GM10248 (cell line): ENCODE measurements at regions of chr12 and their contacts with region 1.

Region 1: DNA sequence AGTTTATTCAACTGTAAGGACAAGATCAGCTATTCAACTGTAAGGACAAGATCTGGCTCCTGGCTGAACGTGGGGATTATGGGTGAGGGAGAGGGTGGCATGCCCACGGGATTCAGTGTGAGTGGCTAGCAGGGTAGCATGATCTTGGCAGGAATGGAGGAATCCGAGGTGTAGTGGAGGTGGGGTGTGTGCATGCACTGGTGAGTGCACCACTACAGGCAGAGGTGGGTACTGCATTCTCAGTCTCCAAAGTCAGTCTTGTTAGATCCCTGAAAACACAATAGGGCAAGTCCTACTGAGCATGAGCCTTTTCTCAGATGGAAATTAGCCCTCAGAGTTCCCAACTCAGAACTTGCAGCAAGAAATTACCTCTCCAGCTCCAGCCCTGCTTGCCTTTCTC is 32.2 kb upstream of the DCD start:
- DNase-seq: peak; percentile 39
- CTCF ChIP-seq: peak; percentile 24

Region 2: DNA sequence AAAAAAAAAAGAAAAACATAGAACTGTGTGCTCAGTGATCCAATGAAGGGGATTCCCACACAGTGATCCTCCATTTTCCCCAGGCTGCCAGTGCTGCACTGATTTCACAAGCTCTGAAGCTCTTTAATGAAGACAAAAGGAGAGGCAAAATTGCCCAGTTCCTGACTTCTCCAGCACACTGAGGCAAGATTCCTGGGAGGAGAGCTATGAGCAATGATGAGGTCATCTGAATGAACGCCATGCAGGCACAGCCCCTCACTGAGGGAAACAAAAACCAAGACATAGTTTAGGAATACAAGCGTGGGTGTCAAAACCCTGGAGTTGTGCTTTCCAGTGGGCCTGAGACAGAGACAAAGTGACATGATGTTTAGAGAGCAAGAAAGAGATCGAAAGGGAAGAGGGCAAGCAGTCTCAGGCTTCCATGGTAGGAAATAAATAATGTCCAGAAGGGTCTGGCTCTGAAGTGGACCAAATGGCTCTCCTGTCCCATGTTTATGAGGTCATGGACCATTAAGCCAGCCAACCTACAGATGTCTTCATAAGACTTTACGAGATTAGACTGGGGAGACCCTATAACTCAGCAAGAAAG is 450.7 kb before region 1 on chr12:
- CTCF ChIA-PET with region 1: no interaction called
- POLR2A ChIA-PET with region 1: no interaction called
- DNase-seq: no peak
- CTCF ChIP-seq: no peak

Region 3: GRCh38 chr12:54497883-54498282 is 182.5 kb before region 1 on chr12:
- CTCF ChIA-PET with region 1: no interaction called
- POLR2A ChIA-PET with region 1: no interaction called
- DNase-seq: no peak
- CTCF ChIP-seq: no peak

Region 4: GRCh38 chr12:54565986-54566544 is 114.3 kb before region 1 on chr12:
- CTCF ChIA-PET with region 1: no interaction called
- POLR2A ChIA-PET with region 1: no interaction called
- DNase-seq: no peak
- CTCF ChIP-seq: no peak

Region 5: DNA sequence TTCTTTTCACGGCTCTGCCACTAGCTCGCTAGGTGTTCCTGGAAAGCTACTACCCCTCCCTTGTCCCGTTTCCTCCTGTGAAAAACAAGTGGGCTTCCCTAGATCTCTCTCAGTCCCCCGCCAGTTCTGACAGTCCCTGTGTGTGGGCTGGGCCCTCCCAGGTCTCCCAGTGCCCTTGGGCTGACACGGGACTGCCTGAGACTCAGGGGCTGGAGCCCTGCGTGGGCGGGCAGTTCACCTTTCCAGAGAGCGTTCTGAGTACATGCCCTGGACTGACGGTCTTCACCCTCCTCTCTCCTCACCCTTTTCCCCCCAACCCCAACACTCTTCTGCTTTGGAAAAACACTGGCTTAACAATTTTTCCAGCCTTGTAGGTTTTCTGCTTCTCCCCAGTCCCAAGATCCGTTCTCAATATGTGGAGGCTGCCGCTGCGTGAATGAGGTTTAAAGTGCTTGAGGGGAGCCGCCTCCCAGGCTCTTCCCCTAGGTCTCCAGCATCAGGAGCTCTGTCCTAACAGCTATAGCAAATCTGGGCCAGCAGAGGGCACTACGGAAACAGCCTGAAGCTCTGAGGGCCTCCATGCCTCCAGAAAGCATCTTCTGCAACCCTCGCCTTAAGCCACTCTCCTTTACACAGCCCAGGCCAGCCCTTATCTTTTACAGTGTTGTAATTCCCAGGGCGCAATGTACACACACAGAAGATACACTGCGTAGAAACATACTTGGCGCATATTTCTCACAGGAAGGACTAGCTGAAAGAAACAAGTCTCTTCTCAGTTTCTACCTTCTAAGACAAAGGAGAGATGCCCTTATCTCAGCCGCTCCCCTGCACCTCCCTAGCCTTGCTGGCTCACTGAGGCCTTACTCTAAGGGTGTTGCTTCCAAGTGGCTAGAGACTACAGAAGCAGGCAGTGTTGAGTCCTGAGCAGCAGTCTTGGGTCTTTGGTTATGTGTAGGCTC is 21.8 kb before region 1 on chr12:
- CTCF ChIA-PET with region 1: interaction called, 20 read pairs
- POLR2A ChIA-PET with region 1: no interaction called
- DNase-seq: peak; percentile 75
- CTCF ChIP-seq: peak; percentile 77

Region 6: DNA sequence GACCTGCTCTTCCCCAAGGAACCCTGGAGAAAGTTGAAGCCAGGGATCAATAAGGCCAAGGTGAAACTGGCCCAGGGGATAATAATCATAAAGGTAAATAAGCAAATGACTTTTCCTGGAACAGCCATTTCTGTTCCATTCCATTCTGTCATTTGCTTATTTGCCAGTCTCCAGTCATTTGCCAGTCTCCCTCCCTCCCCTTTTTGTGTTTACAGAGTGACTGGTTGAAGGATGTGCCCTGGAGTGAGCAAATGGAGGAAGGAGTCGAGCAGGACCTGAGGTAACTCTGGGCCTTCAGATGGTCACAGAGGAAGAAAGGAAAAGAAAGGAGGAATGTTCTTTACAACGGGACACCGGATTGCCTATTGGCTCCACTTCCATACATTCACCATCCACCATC is 14.4 kb before region 1 on chr12:
- CTCF ChIA-PET with region 1: interaction called, 11 read pairs
- POLR2A ChIA-PET with region 1: no interaction called
- DNase-seq: no peak
- CTCF ChIP-seq: no peak

Region 7: GRCh38 chr12:54740882-54741281 is 60.5 kb after region 1 on chr12:
- CTCF ChIA-PET with region 1: no interaction called
- POLR2A ChIA-PET with region 1: no interaction called
- DNase-seq: no peak
- CTCF ChIP-seq: no peak